ENCODE measurements at regions of chr7 and their contacts with region 1.

Region 1: DNA sequence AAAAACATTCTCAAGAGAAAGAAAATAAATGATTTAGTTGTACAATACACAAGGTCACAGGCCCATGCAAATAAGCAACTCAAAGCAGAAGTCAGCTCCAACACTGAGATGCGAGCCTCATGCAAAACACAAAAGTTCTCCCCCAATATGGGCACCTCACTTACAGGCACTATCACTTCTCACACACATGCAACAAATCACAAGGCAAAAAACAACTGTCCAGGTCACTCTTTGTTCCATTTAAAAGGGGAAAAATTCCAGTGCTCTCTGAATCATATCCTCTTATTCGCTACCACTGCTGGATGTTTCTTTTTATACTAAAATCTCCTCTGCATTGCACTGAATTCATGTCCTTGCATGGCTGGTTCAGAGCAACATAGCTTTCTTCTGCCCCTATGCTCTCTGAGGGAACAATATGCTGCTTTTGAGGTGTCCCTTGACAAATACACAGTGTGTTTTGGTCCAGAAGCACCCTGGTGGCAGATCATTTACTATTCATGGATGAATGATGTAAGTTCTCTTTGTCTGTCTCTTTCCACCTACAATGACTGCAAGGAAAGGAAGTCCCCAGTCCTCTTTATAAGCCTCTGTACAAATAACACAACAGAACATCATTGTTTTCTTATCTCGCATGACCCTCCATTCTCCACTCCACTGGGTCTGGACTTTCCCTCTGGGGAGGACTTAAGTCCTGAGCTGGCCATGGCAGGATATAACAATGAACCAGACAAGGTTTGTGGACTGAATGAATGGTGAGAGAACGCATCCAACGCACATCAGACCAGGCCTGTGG is 85.4 kb upstream of the GSDME start:
- DNase-seq: no peak
- ATAC-seq: peak in 1 of 4 donors; percentile 36
- H3K4me3 ChIP-seq: no peak overlapping the region
- H3K27ac ChIP-seq: peak overlapping the region in 1 of 12 donors; percentile 37
- H3K4me1 ChIP-seq: peaks cover 0 to 5% (median 0%) of the 10 kb centered on the region in 12 donors
- H3K27me3 ChIP-seq: no peaks in the 10 kb centered on the region
- CTCF ChIP-seq: no peak
- POLR2A ChIP-seq: no peak

Region 2: GRCh38 chr7:24722386-24723177 is 120.1 kb before region 1 on chr7:
- intact Hi-C with region 1: no loop called
- DNase-seq: no peak
- ATAC-seq: peak in 2 of 4 donors; percentile 33 to 44
- H3K4me3 ChIP-seq: no peak overlapping the region
- H3K27ac ChIP-seq: no peak overlapping the region
- H3K4me1 ChIP-seq: peaks cover 0 to under 1% (median 0%) of the 10 kb centered on the region in 12 donors
- H3K27me3 ChIP-seq: no peaks in the 10 kb centered on the region
- CTCF ChIP-seq: peak in 7 of 12 donors; percentile 13 to 41 (median 29)
- POLR2A ChIP-seq: no peak

Region 3: DNA sequence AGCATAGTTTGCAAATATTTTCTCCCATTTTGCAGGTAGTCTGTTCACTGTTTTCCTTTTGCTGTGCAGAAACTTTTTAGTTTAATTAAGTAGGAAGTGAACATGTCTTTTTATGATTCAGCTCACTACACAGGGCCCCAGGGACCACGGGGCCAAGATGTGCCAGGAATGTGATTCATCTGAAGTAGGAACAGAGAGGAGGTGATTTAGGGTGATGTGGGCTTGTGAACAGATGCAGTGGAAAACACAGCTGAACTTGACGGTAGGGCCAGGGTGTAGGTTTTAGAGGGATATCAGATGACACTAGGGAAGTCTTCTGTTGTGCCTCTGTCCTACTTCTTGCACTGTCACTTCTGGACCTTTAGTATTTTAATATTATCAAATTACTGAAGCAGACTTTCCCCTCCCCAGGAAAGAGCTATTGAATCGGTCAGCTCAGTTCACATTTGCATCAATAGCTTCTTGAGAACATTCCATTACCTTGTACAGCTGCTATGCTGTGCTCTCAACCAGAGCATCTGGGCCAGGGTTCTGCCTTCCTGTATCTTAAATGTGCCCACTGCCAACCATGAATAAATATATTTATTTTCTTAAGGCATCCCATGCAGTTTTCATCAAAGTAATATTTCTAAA is 40.5 kb after region 1 on chr7:
- intact Hi-C with region 1: loop called in 1 of 10 experiments (anchors 5 kb)
- DNase-seq: peak; percentile 33 to 74 (median 65)
- ATAC-seq: peak; percentile 74 to 91 (median 79)
- H3K4me3 ChIP-seq: no peak overlapping the region
- H3K27ac ChIP-seq: peak overlapping the region in 1 of 12 donors; percentile 33
- H3K4me1 ChIP-seq: peaks cover 0 to 27% (median 2%) of the 10 kb centered on the region in 12 donors
- H3K27me3 ChIP-seq: no peaks in the 10 kb centered on the region
- CTCF ChIP-seq: no peak
- POLR2A ChIP-seq: no peak